BJ (cell line): ENCODE measurements at regions of chr5 and their contacts with region 1.

Region 1: GRCh38 chr5:142186857-142187594 is 78.4 kb downstream of the NDFIP1 start:
- DNase-seq: no peak
- H3K4me3 ChIP-seq: no peak overlapping the region
- H3K27me3 ChIP-seq: no peaks in the 10 kb centered on the region
- CTCF ChIP-seq: no peak

Region 2: GRCh38 chr5:142170254-142170953 is 16.6 kb before region 1 on chr5:
- CTCF ChIA-PET with region 1: no interaction called
- POLR2A ChIA-PET with region 1: interaction called, 13 read pairs
- DNase-seq: no peak
- H3K4me3 ChIP-seq: no peak overlapping the region
- H3K27me3 ChIP-seq: no peaks in the 10 kb centered on the region
- CTCF ChIP-seq: no peak